OCI-LY7 (cell line): ENCODE measurements at regions of chr12 and their contacts with region 1.

Region 1: DNA sequence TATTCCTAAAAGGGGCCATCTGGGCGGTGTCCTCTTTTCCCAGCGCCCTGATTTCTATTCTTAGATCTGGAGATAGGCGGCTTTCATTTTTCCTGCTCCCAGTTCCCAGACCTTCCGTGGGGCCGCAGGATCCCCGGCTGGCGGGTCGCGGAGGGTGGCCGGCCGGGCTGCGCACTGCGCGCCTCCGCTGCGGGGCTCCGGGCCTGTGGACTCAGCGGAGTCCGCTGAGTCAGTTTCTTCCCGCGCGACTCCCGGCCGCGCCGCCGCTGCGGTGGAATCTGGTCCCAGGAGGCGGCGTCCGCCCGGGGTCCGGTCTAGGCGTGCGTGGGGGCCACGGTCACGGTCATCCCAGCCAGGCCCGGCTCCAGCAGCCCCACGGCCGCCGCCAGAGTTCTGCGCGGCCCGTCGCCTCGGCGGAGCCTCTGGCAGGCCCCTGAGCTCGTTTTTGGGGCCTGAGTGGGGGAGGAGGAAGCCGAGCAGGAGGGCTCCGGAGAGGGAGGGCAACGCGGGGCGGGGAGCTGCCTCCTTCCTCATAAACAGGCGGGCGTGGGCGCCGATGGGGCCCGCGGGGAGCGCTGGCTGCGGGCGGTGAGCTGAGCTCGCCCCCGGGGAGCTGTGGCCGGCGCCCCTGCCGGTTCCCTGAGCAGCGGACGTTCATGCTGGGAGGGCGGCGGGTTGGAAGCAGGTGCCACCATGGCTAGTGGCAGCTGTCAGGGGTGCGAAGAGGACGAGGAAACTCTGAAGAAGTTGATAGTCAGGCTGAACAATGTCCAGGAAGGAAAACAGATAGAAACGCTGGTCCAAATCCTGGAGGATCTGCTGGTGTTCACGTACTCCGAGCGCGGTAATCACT is at the start of gene LRRK2:
- DNase-seq: peak; percentile 93
- H3K4me3 ChIP-seq: peak within 1 kb of the TSS; percentile 78
- H3K27ac ChIP-seq: peak within 1 kb of the TSS; percentile 99
- H3K4me1 ChIP-seq: peaks cover 60% of the 10 kb centered on the region
- CTCF ChIP-seq: peak; percentile 26; the same call in 1 of the 2 replicates
- total RNA-seq, gene LRRK2: 5.9 and 10.1 TPM in 2 replicates

Region 2: GRCh38 chr12:39619660-39620433 is 604.8 kb before region 1 on chr12 and contains the start of gene ABCD2:
- CTCF ChIA-PET with region 1: no interaction called
- POLR2A ChIA-PET with region 1: no interaction called
- intact Hi-C with region 1: loop called (anchors 10 kb)
- DNase-seq: peak; percentile 87
- H3K4me3 ChIP-seq: peak within 1 kb of the TSS; percentile 74
- H3K27ac ChIP-seq: peak within 1 kb of the TSS; percentile 87
- H3K4me1 ChIP-seq: peaks cover 51% of the 10 kb centered on the region
- CTCF ChIP-seq: peak; percentile 55
- total RNA-seq, gene ABCD2: 1.2 and 1.5 TPM in 2 replicates

Region 3: GRCh38 chr12:40107098-40107802 is 117.4 kb before region 1 on chr12:
- CTCF ChIA-PET with region 1: no interaction called
- POLR2A ChIA-PET with region 1: no interaction called
- intact Hi-C with region 1: loop called (anchors 2 kb)
- DNase-seq: peak; percentile 91
- H3K4me3 ChIP-seq: peak overlapping the region; percentile 96
- H3K27ac ChIP-seq: no peak overlapping the region
- H3K4me1 ChIP-seq: peaks cover 39% of the 10 kb centered on the region
- CTCF ChIP-seq: peak; percentile 98

Region 4: DNA sequence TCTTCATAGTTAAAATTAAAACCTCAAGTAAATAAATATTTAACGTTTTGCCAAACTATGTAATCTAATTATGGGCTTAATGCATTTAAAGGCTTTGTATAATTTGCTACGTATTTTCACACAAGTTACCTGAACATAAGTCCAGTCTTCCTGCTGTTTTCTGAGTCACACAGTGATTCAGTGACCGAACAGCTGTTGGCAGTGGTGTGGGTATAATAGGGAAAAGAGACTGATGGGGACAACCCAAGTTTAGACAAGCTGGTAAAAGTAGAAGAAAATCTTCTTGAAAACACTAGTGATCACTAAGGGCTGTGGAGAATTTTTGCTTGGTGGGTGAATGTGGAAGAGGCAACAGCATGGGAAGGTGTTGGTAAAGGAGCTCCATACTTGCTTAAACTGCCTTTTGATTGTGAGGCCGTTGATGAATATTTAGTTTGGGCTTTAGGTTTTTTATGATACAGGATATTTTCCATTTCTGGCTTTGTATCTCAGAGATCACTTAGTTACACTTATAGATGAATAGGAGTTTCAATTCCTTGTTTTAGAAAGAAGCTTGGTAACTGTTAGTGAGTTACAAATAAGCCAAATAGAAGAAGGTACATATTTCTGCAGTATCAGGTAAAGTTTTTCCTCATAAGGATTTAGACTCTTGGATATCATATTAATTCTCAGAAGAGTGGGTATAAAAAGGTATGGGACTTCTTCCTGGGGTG is 24.1 kb after region 1 on chr12:
- CTCF ChIA-PET with region 1: no interaction called
- POLR2A ChIA-PET with region 1: interaction called, 46 read pairs
- intact Hi-C with region 1: no loop called
- DNase-seq: peak; percentile 56
- H3K4me3 ChIP-seq: peak overlapping the region; percentile 37
- H3K27ac ChIP-seq: peak overlapping the region; percentile 88
- H3K4me1 ChIP-seq: peaks cover 47% of the 10 kb centered on the region
- CTCF ChIP-seq: no peak

Region 5: DNA sequence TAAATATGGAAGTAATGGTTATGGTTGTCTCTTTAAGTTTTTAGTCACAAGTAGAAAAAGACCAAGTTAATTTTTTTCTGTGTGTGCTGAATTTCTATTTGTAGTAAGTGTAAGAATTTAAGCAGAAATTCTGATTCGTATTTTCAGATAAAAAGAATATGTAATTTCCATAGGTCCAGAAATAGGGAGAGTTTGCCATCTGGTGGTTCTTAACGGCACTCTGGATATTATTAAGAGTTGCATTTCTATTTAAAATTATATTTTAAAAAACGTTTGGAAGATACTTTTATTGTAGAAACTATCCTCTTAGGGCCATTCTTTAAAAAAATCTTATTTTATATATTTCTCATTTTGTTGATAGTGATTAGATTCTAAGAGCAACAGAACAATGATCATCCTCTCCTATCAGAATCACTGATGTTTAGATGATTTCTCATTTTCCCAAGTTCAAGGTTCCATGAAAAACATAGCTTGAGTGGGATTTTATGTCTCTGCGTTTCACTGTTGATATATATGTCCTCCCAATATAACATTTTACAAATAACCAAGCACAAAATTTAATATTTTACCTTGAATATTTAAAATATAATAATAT is 88.4 kb after region 1 on chr12:
- CTCF ChIA-PET with region 1: interaction called, 3 read pairs
- POLR2A ChIA-PET with region 1: interaction called, 13 read pairs
- intact Hi-C with region 1: loop called (anchors 2 kb)
- DNase-seq: peak; percentile 54
- H3K4me3 ChIP-seq: no peak overlapping the region
- H3K27ac ChIP-seq: peak overlapping the region; percentile 35
- H3K4me1 ChIP-seq: peaks cover 36% of the 10 kb centered on the region
- CTCF ChIP-seq: peak; percentile 97